ENCODE measurements at regions of chr17 and their contacts with region 1.

Region 1: DNA sequence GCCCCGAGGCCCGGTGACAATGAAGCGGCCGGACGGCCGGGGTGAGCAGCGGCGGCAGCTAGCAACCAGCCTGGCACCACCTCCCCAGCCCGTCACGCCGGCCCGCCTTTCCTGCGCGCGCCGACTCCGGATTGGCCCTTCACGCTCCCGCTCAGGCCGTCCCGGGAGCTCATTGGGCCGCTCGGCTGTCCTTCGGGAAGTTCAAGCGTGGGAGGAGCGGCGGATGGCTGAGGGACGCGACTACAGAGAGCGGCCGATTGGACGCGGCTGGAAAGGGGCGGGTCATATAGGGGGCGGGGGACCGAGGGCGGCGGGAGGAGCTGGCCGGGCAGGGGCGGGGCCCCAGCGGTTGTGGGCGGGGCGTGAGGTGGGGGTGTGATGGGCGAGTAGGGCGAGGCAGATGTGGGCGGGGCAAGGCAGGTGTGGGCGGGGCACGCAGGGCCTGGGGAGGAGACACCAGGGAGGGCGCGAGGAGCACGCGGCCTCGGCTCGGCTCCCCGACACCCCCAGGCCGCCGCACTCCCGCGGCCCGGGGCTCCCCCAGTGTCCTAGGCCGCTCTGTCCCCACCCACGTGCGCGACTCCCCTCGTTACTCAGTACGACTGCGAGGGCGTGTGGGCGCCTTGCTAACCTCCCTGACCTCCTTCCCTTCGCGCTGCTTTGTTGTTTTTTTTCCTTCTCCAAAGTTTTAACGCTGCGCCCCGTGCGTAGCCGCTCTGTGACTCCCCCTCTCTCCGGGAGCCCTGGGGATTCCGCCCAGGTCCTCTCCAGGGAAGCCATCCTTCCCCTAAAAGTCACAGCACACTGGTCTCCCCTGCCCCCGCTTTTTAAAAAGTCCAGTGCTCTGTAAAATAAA is at the start of gene CEP131:
- DNase-seq: peak; percentile 99 to 100
- ATAC-seq: peak; percentile 98 to 100 (median 99)
- H3K4me3 ChIP-seq: peak within 1 kb of the TSS; percentile 69 to 93 (median 84)
- H3K27ac ChIP-seq: peak within 1 kb of the TSS in 4 of 10 donors; percentile 14 to 77 (median 62)
- H3K4me1 ChIP-seq: peaks cover 7 to 26% (median 17%) of the 10 kb centered on the region in 9 donors
- H3K27me3 ChIP-seq: no peaks in the 10 kb centered on the region
- CTCF ChIP-seq: peak in 1 of 9 donors; percentile 6
- total RNA-seq, gene CEP131: 6.4 to 14.4 (median 7.6) TPM

Region 2: DNA sequence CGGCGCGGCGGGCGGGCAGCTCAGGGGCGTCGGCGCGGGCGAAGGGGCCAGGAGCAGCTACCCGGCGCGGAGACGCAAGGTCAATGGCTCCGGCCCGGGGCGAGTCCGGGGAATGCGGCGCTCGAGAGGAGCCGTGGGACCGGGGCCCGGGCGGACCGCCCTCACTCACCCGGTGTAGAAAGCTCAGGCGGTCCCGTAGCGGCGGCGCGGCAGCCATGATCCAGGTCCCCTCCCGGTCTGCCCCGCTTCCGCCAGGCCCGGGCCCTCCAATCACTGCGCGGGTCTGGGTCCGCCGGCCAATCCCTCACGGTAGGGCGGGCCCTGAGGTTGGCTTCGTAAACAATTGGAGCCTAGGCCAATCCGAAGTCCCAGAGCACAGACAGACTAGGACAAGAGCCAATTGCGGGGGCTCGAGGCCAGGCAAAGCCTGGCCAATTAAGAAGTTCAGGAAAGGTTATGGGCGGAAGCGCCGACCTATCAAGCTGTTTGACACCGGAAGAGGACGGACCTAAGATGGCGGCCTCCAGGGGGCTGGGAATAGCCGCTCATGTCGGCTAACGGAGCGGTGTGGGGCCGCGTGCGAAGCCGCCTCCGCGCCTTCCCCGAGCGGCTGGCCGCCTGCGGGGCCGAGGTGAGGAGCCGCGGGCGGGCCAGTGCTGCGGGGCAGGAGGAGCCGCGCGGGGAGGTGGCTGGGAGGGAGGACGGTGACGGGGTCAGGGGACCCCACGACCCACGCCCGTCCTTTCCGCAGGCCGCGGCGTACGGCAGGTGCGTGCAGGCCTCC is 15.9 kb after region 1 on chr17 and contains the starts of genes NDUFAF8 and TEPSIN:
- intact Hi-C with region 1: loop called in 1 of 10 experiments (anchors 1 kb)
- DNase-seq: peak; percentile 95 to 98
- ATAC-seq: peak; percentile 96 to 99 (median 98)
- H3K4me3 ChIP-seq: peak within 1 kb of the TSS; percentile 81 to 100 (median 92)
- H3K27ac ChIP-seq: peak within 1 kb of the TSS; percentile 59 to 90 (median 82)
- H3K4me1 ChIP-seq: peaks cover 10 to 52% (median 32%) of the 10 kb centered on the region in 9 donors
- H3K27me3 ChIP-seq: no peaks in the 10 kb centered on the region
- CTCF ChIP-seq: peak in 2 of 9 donors; percentile 8 to 25
- total RNA-seq, gene NDUFAF8: 49.6 to 74.8 (median 58.9) TPM
- total RNA-seq, gene TEPSIN: 6.2 to 21.4 (median 9.2) TPM

Measured in heart right ventricle (tissue), 16 donors.